ENCODE measurements at regions of chr5 and their contacts with region 1.

Region 1: GRCh38 chr5:173331956-173332479 is 3.8 kb upstream of the STC2 start:
- DNase-seq: peak; percentile 95
- ATAC-seq: peak; percentile 55
- H3K4me3 Mint-ChIP-seq: no peak overlapping the region
- H3K27ac Mint-ChIP-seq: peak overlapping the region; percentile 39
- H3K4me1 Mint-ChIP-seq: peaks cover 26% of the 10 kb centered on the region
- H3K27me3 Mint-ChIP-seq: peaks cover 50% of the 10 kb centered on the region

Region 2: DNA sequence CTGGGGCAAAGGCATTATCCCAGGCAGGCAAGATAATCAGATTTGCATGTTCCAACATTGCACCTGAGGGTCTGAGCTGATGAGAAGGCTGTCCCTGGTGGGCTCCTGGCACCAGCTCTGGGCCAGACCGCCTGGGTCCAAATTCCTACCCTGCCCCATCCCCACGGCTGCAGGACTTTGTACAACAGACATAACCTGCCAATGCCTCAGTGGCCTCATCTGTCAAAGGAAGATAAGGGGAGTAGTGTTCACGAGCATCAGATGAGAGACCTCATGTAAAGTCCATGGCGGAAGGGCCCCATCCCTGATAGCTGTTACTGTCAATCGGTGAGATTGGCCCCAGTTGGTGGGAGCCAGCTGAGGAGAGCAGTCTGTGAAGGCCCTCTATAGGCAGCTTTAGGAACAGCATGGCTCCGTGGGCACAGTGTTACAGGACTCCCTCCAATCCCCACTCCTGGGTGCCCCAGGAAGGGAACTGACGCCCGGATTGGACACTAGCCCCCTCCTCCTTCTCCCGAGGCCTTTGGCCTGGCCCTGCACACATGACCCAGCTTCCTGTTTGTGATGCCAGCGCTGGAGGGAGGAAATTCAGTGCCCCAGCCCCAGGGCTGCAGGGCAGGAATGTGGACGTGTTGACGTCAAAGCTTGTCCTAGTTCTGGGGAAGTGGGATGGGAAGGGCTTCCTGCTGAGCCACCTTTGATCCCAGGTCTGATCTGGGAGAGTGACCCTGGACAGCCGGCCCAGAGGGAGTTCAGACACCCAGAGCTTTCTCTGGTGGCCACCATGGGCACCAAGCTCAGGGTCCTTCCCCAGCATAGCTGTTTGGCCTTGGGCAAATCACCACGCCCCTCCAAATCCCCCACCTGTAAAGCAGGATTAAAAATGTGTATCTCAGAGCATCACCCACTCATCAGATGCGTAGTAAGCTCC is 617.3 kb before region 1 on chr5:
- CTCF ChIA-PET with region 1: no interaction called
- POLR2A ChIA-PET with region 1: no interaction called
- intact Hi-C with region 1: loop called in 1 of 2 experiments (anchors 1 kb)
- DNase-seq: peak; percentile 82
- ATAC-seq: peak; percentile 84
- H3K4me3 Mint-ChIP-seq: no peak overlapping the region
- H3K27ac Mint-ChIP-seq: no peak overlapping the region
- H3K4me1 Mint-ChIP-seq: peaks cover 6% of the 10 kb centered on the region
- H3K27me3 Mint-ChIP-seq: peaks cover 5% of the 10 kb centered on the region

Region 3: DNA sequence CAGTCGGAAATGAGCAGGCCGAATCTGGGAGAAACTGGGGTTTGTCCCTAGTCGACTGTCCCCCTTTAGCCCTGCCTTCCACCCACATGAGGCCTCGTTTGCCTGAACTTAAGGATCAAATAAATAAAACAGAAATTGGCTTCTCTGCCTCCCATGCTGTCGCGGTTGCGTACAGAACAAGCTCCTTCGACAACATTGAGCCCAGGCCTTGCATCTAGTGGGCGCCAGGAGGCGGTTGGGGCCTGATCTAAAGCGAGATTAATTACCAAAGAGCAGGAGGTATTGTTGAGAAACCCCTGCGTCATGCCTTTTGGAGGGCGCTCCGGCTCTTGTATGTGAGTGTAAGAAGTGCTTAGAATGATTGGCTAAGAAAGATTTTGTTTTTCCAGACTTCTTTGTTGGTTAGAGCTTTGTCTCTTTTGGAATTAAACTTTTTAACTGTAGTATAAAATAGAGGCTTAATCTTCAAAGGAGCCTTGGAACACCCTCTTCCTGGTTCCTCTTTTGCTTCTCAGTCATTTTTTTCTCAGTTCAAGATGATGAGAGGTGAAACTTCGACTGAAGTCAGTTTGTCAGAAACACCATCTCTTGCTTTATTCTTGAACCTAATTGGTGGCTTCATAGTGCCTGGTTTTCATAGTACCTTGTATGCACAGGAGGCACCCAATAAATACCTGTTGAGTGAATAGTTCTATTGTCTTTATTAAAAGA is 347.6 kb before region 1 on chr5:
- CTCF ChIA-PET with region 1: interaction called, 4 read pairs
- POLR2A ChIA-PET with region 1: interaction called, 5 read pairs
- intact Hi-C with region 1: loop called (anchors 1 to 2 kb)
- DNase-seq: peak; percentile 90
- ATAC-seq: peak; percentile 79
- H3K4me3 Mint-ChIP-seq: peak overlapping the region; percentile 96
- H3K27ac Mint-ChIP-seq: peak overlapping the region; percentile 99
- H3K4me1 Mint-ChIP-seq: peaks cover 37% of the 10 kb centered on the region
- H3K27me3 Mint-ChIP-seq: no peaks in the 10 kb centered on the region

Region 4: GRCh38 chr5:173165177-173166016 is 166.6 kb before region 1 on chr5:
- CTCF ChIA-PET with region 1: no interaction called
- POLR2A ChIA-PET with region 1: no interaction called
- intact Hi-C with region 1: loop called in 1 of 2 experiments (anchors 5 kb)
- DNase-seq: no peak
- ATAC-seq: no peak
- H3K4me3 Mint-ChIP-seq: no peak overlapping the region
- H3K27ac Mint-ChIP-seq: no peak overlapping the region
- H3K4me1 Mint-ChIP-seq: no peaks in the 10 kb centered on the region
- H3K27me3 Mint-ChIP-seq: no peaks in the 10 kb centered on the region

Region 5: DNA sequence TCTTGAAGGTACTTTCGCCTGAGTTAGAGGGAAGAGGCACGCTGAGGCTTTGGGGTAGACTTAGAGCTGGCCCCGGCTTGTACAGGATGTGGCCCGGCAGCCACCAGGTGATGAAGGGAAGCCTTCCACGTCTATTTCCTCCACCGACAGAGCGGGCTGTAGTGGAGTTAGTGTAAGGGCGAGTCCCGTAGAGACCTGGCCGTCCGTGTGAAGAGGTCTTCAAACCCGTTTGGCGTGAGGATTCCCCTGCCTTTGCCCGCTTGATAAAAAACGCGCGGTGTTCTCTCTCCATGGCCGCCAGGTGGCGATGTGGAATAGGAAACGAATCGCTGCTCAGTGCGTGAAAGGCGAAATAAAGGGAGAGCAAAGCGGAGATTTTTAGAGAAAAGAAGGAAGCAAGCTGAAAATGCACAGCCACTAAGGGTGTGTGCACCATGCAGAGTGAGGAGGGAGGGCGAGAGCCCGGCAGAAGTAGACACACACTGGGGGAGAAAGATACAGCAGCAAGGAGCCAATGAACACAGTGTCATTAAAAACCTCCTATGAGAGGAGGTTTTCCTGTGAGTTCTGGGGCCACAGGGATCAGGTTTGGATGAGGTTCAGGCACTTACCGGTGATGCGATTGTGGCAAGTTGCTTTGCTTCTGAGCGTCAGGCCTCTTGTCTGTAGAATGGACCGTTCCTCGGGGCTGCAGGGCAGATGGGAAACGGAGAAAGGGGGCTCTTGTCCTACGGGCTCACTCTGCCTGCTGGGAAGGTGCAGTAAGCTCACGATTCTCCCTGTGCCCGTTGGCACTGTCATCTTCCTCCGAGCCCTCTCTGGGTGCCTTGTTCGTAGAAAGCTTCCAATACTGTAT is 38.0 kb before region 1 on chr5:
- CTCF ChIA-PET with region 1: interaction called, 164 read pairs
- POLR2A ChIA-PET with region 1: interaction called, 5 read pairs
- intact Hi-C with region 1: loop called (anchors 1 kb)
- DNase-seq: peak; percentile 87
- ATAC-seq: peak; percentile 85
- H3K4me3 Mint-ChIP-seq: peak overlapping the region; percentile 16
- H3K27ac Mint-ChIP-seq: no peak overlapping the region
- H3K4me1 Mint-ChIP-seq: peaks cover 12% of the 10 kb centered on the region
- H3K27me3 Mint-ChIP-seq: peaks cover 32% of the 10 kb centered on the region

Measured in activated CD4-positive, alpha-beta T cell treated with anti-CD3 and anti-CD28 coated beads for 36 hours (primary cell).